ENCODE measurements at regions of chr12 and their contacts with region 1.

Region 1: GRCh38 chr12:93390549-93391297 is 13.0 kb downstream of the NUDT4 start:
- DNase-seq: no peak
- H3K4me3 ChIP-seq: no peak overlapping the region
- H3K27ac ChIP-seq: no peak overlapping the region
- H3K4me1 ChIP-seq: peaks cover 5% of the 10 kb centered on the region
- H3K27me3 ChIP-seq: no peaks in the 10 kb centered on the region
- CTCF ChIP-seq: no peak
- POLR2A ChIP-seq: no peak

Region 2: GRCh38 chr12:92987362-92987761 is 403.4 kb before region 1 on chr12:
- intact Hi-C with region 1: loop called (anchors 10 kb)
- DNase-seq: peak; percentile 25
- H3K4me3 ChIP-seq: no peak overlapping the region
- H3K27ac ChIP-seq: no peak overlapping the region
- H3K4me1 ChIP-seq: peaks cover 6% of the 10 kb centered on the region
- H3K27me3 ChIP-seq: no peaks in the 10 kb centered on the region
- CTCF ChIP-seq: peak; percentile 52 to 68 (median 67)
- POLR2A ChIP-seq: no peak